Breast epithelium (tissue), 4 donors: ENCODE measurements at regions of chr19 and their contacts with region 1.

Region 1: DNA sequence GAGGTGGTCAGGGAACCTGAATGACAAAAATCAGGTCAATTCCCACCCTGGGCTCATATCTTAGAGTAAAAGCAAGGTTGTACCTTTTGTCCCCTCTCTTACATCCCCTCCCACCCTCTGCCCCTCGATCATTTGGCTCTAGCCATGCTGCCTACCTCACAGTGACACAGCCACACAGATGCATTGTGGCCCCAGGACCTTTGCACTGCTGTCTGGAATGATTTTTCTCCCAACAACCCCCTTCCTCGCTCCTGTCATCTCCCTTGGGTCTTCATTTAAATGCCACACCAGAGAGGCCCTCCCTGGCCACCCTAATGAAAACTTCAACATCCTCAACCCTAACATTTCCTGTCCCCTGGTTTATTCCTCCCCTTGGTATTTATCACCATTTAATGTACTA is 4.3 kb downstream of the MYH14 start:
- DNase-seq: no peak
- H3K4me3 ChIP-seq: no peak overlapping the region
- H3K27ac ChIP-seq: no peak overlapping the region
- H3K4me1 ChIP-seq: no peaks in the 10 kb centered on the region
- H3K27me3 ChIP-seq: peaks cover 0 to 30% of the 10 kb centered on the region in 2 donors
- CTCF ChIP-seq: no peak
- POLR2A ChIP-seq: no peak

Region 2: GRCh38 chr19:50191212-50191611 is 16.5 kb before region 1 on chr19:
- intact Hi-C with region 1: no loop called
- DNase-seq: no peak
- H3K4me3 ChIP-seq: no peak overlapping the region
- H3K27ac ChIP-seq: no peak overlapping the region
- H3K4me1 ChIP-seq: no peaks in the 10 kb centered on the region
- H3K27me3 ChIP-seq: peaks cover 0 to 16% of the 10 kb centered on the region in 2 donors
- CTCF ChIP-seq: no peak
- POLR2A ChIP-seq: no peak

Region 3: DNA sequence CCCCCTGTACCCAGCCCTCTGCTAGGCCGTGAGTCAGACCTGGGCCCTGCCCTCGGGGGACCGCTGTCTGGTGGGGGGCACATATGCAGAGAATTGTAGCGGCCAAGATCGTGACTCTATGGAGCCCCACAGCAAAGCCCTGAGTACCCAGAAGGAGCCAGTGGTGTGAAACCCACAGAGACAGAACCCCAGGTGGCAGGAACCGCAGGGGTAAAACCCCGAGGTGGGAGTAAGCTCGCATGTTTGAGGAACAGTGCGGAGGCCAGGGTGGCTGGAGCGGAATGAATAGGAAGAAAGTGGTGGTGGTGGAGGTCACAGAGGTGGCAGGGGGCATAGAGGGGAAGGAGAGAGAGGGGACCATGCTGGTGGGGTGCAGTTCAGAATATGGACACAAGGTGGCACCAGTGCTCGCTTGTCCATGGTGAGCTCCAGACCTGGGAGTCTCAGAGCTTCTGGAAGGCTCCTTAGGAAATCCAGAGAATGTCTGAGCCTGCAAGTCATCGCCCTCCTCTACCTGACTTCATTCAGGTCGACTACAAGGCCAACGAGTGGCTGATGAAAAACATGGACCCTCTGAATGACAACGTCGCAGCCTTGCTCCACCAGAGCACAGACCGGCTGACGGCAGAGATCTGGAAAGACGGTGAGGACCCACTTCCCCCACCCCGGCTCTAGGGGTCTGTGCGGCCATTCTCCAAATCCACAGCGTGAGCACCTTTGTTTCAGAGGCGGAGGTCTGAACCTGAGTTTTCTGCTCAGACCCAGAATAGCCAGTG is 44.6 kb after region 1 on chr19:
- intact Hi-C with region 1: loop called (anchors 1 kb)
- DNase-seq: no peak
- H3K4me3 ChIP-seq: no peak overlapping the region
- H3K27ac ChIP-seq: no peak overlapping the region
- H3K4me1 ChIP-seq: no peaks in the 10 kb centered on the region
- H3K27me3 ChIP-seq: no peaks in the 10 kb centered on the region
- CTCF ChIP-seq: peak in 2 of 3 donors; percentile 45 to 58
- POLR2A ChIP-seq: no peak

Region 4: DNA sequence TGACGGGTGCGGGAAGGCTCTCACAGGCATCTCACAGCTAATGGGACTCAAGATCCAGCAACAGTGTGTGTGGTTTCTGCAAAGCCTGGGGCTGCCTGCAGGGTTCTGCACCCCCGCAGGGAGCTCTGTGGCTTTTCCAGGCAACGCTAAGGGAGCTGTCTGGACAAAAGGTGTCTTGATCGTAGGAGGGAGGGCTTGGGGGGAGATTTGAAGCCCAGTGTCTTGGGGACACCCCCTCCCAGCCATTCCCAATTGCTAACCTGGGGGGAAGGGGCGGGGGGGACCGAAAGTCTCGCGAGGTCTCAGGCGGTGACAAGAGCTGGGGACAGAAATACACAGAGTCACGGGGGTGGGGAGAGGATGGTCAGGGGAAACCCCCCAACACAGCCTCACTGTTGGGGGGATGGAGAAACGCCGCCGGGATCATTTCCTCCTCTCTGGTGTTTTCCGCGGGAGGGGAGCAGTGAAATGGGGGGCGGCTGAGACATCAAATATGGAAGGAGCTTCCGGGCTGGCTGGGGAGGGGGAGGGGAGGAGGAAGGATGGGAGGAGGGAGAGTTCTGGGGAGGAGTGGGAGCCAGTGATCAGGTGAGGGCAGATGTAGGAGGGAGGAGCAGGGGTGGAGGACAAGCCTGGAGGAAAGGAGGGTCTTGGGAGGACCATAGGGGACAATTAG is 108.2 kb after region 1 on chr19:
- intact Hi-C with region 1: no loop called
- DNase-seq: no peak
- H3K4me3 ChIP-seq: peak overlapping the region in 2 of 3 donors; percentile 26 to 38
- H3K27ac ChIP-seq: no peak overlapping the region
- H3K4me1 ChIP-seq: no peaks in the 10 kb centered on the region
- H3K27me3 ChIP-seq: peaks cover 3 to 51% of the 10 kb centered on the region in 2 donors
- CTCF ChIP-seq: no peak
- POLR2A ChIP-seq: no peak